Sciatic nerve (tissue), 2 donors: ENCODE measurements at regions of chr20 and their contacts with region 1.

Region 1: DNA sequence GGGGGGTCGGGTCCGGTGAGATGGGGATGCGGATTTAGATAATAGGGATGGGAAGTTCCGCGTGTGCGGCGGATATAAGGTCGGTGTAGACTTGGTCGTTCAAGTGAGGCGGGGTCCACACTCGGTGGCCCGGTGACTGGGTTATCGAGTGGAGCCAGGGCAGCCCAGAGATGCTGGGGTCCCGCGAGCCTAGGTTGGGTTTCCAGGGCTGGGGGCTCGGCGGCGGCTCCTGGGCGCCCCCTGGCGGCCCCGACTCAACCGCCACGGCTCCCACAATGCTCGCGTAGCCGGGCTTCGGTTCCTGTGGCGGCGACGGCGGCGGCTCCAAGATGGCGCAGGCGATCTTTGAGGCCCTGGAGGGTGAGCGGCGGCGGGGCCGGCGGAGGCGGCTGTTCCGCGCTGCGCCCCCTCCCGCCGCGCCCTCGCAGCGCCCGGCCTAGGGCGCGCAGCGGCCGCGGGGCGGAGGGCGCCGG is at the start of gene ZNF341:
- DNase-seq: peak; percentile 92
- ATAC-seq: peak; percentile 85
- total RNA-seq, gene ZNF341: 4.7 TPM

Region 2: DNA sequence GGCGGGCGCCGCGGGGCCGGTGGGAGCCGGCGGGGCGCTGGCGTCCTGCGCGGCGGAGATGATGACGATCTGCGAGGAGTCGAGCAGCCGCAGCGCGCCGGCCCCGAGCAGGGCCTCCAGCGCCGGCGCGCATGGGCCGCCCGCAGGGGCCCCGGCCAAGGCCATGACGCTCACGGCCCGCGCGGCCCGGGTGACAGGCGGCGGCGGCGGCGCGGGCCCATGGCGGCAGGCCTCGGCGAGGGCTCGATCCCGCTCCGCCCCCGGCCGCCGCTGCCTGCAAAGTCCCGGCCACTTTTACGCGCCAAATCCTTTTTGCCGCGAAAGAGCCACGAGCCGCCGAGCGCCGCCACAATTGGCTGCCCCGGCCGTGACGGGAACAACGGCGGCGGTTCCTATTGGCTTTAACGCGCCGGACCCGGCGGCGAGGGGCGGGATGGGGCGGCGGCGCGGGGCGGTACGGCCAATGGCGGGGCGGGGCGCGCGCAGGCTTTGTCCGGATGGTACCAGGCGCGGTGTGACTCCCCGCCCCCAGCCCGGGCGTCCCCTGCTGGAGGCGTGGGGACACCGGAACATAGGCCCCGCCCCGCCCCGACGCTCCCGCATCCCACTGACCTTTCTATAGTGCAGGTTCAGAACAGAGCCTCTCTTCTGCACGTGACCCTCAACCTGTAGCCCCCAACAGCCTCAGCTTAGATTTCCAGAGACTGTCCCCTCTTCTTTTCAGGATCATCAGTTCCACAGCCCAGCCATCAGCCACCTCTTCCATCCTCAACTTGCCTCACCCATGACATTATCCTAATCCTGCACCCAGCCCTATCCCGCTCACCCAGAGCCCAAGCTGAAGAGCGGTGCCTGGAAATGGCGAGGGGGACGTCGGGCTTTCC is 45.4 kb before region 1 on chr20 and contains the start of gene E2F1:
- intact Hi-C with region 1: loop called (anchors 10 kb)
- DNase-seq: peak; percentile 97
- ATAC-seq: peak; percentile 98
- total RNA-seq, gene E2F1: 1.4 TPM